GM12878 (cell line): ENCODE measurements at regions of chr16 and their contacts with region 1.

Region 1: GRCh38 chr16:5108505-5109158 is 11.0 kb upstream of the EEF2KMT start:
- DNase-seq: no peak
- ATAC-seq: no peak
- H3K4me3 ChIP-seq: no peak overlapping the region
- H3K27ac ChIP-seq: no peak overlapping the region
- H3K4me1 ChIP-seq: no peaks in the 10 kb centered on the region
- H3K27me3 ChIP-seq: no peaks in the 10 kb centered on the region
- CTCF ChIP-seq: no peak
- EP300 ChIP-seq: no peak
- POLR2A ChIP-seq: no peak
- RAD21 ChIP-seq: no peak

Region 2: DNA sequence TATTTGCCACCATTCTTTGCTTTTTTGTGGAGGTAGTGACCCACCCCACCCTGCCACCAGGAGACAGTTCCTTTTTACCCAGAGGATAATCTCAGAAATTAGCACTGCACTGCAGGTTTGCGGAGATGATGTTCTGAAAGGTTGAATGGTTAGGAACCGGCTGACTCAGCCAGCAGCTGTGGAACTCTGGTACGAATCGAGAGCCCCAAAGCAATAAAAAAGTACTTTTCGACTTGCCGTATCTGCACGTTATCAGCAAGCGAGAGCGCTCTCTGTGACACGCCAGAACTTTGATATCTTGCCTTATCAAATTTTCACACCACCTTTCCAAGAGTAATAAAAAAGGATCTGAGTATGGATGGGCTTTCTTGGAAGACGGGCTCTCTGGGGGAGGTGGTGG is 85.2 kb after region 1 on chr16:
- CTCF ChIA-PET with region 1: no interaction called
- POLR2A ChIA-PET with region 1: no interaction called
- RAD21 ChIA-PET with region 1: no interaction called
- SMC1A ChIA-PET with region 1: no interaction called
- in situ Hi-C with region 1: no loop called
- intact Hi-C with region 1: loop called (anchors 10 kb)
- DNase-seq: no peak
- ATAC-seq: no peak
- H3K4me3 ChIP-seq: no peak overlapping the region
- H3K27ac ChIP-seq: no peak overlapping the region
- H3K4me1 ChIP-seq: no peaks in the 10 kb centered on the region
- H3K27me3 ChIP-seq: no peaks in the 10 kb centered on the region
- CTCF ChIP-seq: no peak
- EP300 ChIP-seq: no peak
- POLR2A ChIP-seq: no peak
- RAD21 ChIP-seq: no peak